ENCODE measurements at regions of chr1 and their contacts with region 1.

Region 1: GRCh38 chr1:205598841-205599668 is 32.8 kb downstream of the ELK4 start:
- DNase-seq: peak; percentile 91

Region 2: GRCh38 chr1:205631727-205632373 is 32.8 kb after region 1 on chr1 and contains the start of gene ELK4:
- intact Hi-C with region 1: loop called in 1 of 2 experiments (anchors 5 kb)
- DNase-seq: peak; percentile 100
- total RNA-seq, gene ELK4: 49.8 to 54.6 TPM

Region 3: DNA sequence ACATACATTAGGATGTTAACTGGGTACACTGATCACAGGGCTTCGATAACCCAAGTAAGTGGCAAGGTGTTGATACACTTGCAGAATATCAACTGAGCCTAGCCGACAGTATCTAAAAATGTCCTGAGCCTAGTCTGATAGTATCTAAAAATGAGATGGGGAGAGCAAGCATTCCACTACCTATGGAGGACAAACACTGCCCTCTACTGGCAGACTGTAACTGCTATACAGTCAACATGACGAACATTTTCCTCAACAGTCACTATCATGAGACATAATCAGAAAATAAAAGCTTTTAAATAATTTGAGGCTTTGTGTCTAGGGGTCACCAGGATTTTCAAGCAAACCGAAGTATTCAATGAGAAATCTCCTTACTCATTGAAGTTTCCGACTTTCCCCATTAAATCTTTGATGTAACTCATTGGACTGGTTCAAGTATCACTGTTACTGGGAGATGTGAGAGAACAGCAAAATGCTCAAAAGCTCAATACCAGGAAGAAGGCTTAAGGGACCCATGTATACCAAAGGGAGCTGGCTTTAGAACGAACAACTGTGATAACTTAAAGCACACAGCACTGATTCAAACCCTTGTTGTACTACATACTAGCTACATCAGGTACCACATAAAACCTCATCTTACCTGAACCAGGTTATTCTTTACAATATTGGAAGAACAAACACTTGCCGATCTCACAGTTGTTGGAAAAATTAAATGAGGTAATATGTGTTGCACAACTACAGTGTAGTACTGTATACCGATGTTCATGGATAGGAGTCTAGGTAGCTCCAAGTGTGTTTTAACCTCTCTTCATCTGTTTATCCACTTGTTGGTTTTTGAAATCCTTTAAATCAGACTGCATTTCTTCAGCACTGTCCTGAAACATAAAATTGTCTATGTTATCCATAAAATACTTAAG is 112.3 kb after region 1 on chr1:
- intact Hi-C with region 1: loop called in 1 of 2 experiments (anchors 5 kb)
- DNase-seq: no peak